ENCODE measurements at regions of chr10 and their contacts with region 1.

Region 1: DNA sequence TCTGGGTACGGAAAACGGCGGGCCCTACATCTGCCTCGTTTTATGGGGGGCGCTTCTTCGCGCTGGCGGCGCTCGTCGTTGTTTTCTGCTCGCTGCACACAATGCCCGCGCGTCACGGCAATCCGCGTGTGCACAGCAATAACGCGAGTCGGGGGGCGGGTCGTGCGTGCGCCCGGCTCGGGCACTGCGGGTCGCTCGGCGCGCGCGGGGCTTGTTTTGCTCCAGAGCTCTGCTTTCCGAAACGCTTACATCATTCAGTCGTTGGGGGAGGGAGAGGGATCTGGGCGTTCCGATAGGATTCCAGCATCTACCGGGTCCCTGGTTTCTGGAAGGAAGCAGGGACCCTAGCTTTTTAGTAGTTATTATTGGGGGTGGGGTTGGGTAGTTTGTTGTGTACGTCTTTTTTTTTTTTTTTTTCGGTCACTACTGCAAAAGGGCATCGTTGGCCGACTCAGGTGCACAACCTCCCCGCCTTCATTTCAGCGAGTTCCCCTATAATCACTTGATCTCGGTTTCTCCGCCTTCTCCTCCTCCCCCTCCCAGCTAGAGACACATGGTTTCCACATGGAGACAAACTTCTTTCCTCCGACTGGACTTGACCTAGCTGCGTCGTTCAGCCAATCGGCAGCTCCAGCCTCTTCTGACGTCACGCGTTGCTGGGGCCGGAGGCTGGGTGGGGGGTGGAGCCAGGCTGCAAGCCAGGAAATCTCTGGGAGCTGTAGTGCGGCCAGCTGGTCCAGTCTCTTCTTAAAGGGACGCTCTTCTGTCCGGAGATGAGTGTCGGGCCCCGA is 3.5 kb downstream of the MXI1 start:
- DNase-seq: peak; percentile 96 to 97
- H3K4me3 ChIP-seq: peak overlapping the region; percentile 79
- H3K4me3 Mint-ChIP-seq: peak overlapping the region; percentile 81
- H3K27ac Mint-ChIP-seq: peak overlapping the region; percentile 74
- H3K4me1 ChIP-seq: peaks cover 6% of the 10 kb centered on the region; the same call in 1 of the 2 replicates
- H3K4me1 Mint-ChIP-seq: peaks cover 28% of the 10 kb centered on the region
- H3K27me3 ChIP-seq: no peaks in the 10 kb centered on the region
- H3K27me3 Mint-ChIP-seq: no peaks in the 10 kb centered on the region
- CTCF ChIP-seq: no peak

Region 2: GRCh38 chr10:109866168-109866994 is 344.5 kb before region 1 on chr10:
- CTCF ChIA-PET with region 1: no interaction called
- POLR2A ChIA-PET with region 1: no interaction called
- intact Hi-C with region 1: no loop called
- DNase-seq: peak in 1 of 2 experiments; percentile 15
- H3K4me3 ChIP-seq: no peak overlapping the region
- H3K4me3 Mint-ChIP-seq: no peak overlapping the region
- H3K27ac Mint-ChIP-seq: no peak overlapping the region
- H3K4me1 ChIP-seq: no peaks in the 10 kb centered on the region
- H3K4me1 Mint-ChIP-seq: no peaks in the 10 kb centered on the region
- H3K27me3 ChIP-seq: no peaks in the 10 kb centered on the region
- H3K27me3 Mint-ChIP-seq: no peaks in the 10 kb centered on the region
- CTCF ChIP-seq: peak; percentile 28 to 36

Region 3: DNA sequence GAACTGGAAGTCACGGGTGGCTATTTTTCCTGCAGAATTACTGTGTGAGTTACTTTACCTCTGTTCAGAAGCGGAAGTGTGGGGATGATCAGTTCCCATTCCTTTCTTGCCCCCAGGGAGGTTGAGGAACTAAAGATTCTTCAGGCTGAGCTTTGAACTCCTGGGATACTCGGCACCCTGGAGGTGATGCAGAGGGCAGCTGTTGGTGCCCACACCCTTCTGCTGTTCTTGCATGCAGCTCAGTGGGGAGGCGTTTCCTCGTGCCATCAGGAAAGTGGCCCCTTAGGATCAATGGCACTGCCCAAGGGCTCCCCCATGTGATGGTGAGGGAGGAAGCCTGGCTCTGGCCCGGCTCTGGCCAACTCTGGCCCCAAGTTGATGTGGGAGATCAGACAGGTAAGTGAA is 48.1 kb before region 1 on chr10:
- CTCF ChIA-PET with region 1: no interaction called
- POLR2A ChIA-PET with region 1: interaction called, 12 read pairs
- intact Hi-C with region 1: loop called (anchors 1 kb)
- DNase-seq: peak in 1 of 2 experiments; percentile 34
- H3K4me3 ChIP-seq: no peak overlapping the region
- H3K4me3 Mint-ChIP-seq: peak overlapping the region; percentile 55
- H3K27ac Mint-ChIP-seq: peak overlapping the region; percentile 79
- H3K4me1 ChIP-seq: peaks cover 39% of the 10 kb centered on the region
- H3K4me1 Mint-ChIP-seq: peaks cover 31% of the 10 kb centered on the region
- H3K27me3 ChIP-seq: no peaks in the 10 kb centered on the region
- H3K27me3 Mint-ChIP-seq: no peaks in the 10 kb centered on the region
- CTCF ChIP-seq: no peak

Region 4: DNA sequence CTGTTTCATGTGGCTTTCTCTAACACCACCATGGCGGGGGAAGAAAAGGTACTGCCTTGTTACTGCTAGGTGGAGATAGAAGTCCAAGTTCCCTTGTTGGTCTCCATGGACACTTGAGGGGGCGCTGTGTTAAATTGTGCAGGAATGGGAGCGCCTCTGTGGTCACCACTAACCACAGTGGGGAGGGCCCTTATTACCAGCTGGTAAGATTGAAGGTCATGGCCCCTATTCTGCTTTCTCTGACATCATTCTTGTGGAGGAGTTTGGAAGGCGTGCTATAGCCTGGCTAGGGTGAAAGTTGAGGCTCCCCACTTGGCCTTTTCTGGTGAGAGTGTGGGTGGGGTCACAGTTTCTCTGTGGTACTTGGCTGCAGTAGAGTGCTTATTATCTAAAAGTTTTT is 18.3 kb before region 1 on chr10:
- CTCF ChIA-PET with region 1: interaction called, 3 read pairs
- POLR2A ChIA-PET with region 1: interaction called, 3 read pairs
- intact Hi-C with region 1: loop called (anchors 1 kb)
- DNase-seq: no peak
- H3K4me3 ChIP-seq: no peak overlapping the region
- H3K4me3 Mint-ChIP-seq: no peak overlapping the region
- H3K27ac Mint-ChIP-seq: no peak overlapping the region
- H3K4me1 ChIP-seq: peaks cover 14% of the 10 kb centered on the region; the same call in 1 of the 2 replicates
- H3K4me1 Mint-ChIP-seq: peaks cover 14% of the 10 kb centered on the region
- H3K27me3 ChIP-seq: no peaks in the 10 kb centered on the region
- H3K27me3 Mint-ChIP-seq: no peaks in the 10 kb centered on the region
- CTCF ChIP-seq: no peak

Measured in Caco-2 (cell line).